IMR-90 (cell line): ENCODE measurements at regions of chr12 and their contacts with region 1.

Region 1: GRCh38 chr12:18719922-18720510 is 17.8 kb downstream of the PLCZ1 start:
- DNase-seq: peak; percentile 49
- ATAC-seq: peak; percentile 86
- H3K4me3 ChIP-seq: no peak overlapping the region
- H3K27ac ChIP-seq: peak overlapping the region; percentile 73
- H3K4me1 ChIP-seq: peaks cover 3% of the 10 kb centered on the region
- H3K27me3 ChIP-seq: no peaks in the 10 kb centered on the region
- CTCF ChIP-seq: no peak
- POLR2A ChIP-seq: no peak
- RAD21 ChIP-seq: no peak

Region 2: GRCh38 chr12:18706798-18707197 is 13.2 kb before region 1 on chr12:
- CTCF ChIA-PET with region 1: no interaction called
- POLR2A ChIA-PET with region 1: no interaction called
- dilution Hi-C with region 1: no loop called
- in situ Hi-C with region 1: no loop called
- intact Hi-C with region 1: loop called (anchors 1 kb)
- DNase-seq: no peak
- ATAC-seq: no peak
- H3K4me3 ChIP-seq: no peak overlapping the region
- H3K27ac ChIP-seq: no peak overlapping the region
- H3K4me1 ChIP-seq: no peaks in the 10 kb centered on the region
- H3K27me3 ChIP-seq: no peaks in the 10 kb centered on the region
- CTCF ChIP-seq: no peak
- POLR2A ChIP-seq: no peak
- RAD21 ChIP-seq: no peak